CD8-positive, alpha-beta T cell (primary cell): ENCODE measurements at regions of chr7 and their contacts with region 1.

Region 1: DNA sequence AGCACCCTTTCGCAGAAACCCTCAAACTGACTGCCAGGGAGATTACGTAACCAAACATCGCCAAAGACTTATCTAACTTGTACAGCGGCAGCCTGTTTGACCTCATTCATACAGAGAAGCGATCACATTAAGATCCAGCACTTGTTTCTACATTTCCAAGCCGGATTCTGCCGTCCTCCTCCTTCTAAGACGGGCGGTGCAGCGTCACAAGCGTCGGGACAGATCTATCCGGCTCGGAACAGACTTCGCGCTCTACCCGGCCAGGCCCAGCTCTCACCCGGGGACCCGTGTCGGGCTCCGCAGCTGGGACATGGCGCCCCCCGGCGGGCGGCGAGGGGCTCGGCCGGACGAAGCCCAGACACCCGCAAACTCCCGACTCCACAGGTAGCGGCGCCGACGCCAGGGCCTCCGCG is 373 bp downstream of the H2AZ2 start:
- DNase-seq: peak; percentile 75 to 92 (median 84)
- ATAC-seq: peak; percentile 45
- H3K4me3 ChIP-seq: peak overlapping the region; percentile 59 to 66
- H3K4me3 Mint-ChIP-seq: peak overlapping the region; percentile 92
- H3K27ac ChIP-seq: peak overlapping the region; percentile 86 to 99
- H3K27ac Mint-ChIP-seq: peak overlapping the region; percentile 96
- H3K4me1 ChIP-seq: peaks cover 30% of the 10 kb centered on the region
- H3K4me1 Mint-ChIP-seq: peaks cover 42% of the 10 kb centered on the region
- H3K27me3 ChIP-seq: no peaks in the 10 kb centered on the region
- H3K27me3 Mint-ChIP-seq: no peaks in the 10 kb centered on the region
- CTCF ChIP-seq: peak; percentile 56

Region 2: DNA sequence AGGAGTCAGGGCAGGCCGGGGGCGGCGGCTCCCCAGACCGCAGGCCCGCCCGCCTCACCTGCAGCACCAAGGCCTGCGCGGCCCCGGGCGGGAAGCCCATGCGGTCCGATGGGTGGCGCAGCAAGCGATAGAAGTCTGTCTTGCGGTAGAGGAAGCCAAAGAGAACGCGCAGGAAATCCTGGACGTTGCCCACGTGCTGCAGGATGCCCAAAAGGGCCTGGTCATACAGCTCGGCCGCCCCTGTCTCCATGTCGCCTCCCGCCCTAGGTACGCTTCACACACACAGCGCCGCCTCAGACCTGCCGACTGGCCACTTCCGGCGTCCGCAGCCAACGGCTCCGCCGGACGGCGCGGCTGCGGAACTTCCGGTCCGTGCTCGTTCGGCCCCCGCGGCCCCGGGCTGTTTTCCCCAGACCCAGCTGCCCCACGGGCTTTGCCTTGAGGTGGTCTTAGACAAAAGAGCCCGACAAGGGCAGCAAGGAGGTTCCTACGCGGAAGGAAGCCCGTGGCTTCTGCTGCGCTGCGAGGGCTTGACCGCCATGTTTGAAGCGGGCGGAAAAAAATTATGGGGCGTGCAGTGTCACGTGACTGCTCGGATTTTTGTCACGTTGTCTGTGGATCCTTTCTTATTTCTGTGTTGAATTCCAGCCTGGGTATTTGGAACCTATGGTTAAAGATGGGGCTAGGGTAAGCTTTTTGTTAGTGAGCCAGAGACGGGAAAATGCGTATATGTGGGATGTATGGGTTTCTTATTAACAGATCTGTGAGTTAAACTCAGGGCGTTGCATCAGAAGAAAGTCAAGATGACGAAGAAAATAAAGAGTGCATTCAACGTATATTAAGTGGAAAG is 356.9 kb before region 1 on chr7 and contains the start of gene NUDCD3:
- CTCF ChIA-PET with region 1: no interaction called
- POLR2A ChIA-PET with region 1: interaction called, 3 read pairs
- intact Hi-C with region 1: loop called in 1 of 2 experiments (anchors 1 kb)
- DNase-seq: peak; percentile 63 to 91 (median 82)
- ATAC-seq: peak; percentile 67
- H3K4me3 ChIP-seq: peak within 1 kb of the TSS; percentile 77 to 97
- H3K4me3 Mint-ChIP-seq: peak within 1 kb of the TSS; percentile 88
- H3K27ac ChIP-seq: peak within 1 kb of the TSS; percentile 95 to 100
- H3K27ac Mint-ChIP-seq: peak within 1 kb of the TSS; percentile 97
- H3K4me1 ChIP-seq: peaks cover 42% of the 10 kb centered on the region
- H3K4me1 Mint-ChIP-seq: peaks cover 47% of the 10 kb centered on the region
- H3K27me3 ChIP-seq: no peaks in the 10 kb centered on the region
- H3K27me3 Mint-ChIP-seq: peaks cover 2% of the 10 kb centered on the region
- CTCF ChIP-seq: no peak
- total RNA-seq, gene NUDCD3: 40.6 to 45.9 TPM

Region 3: GRCh38 chr7:44581879-44582603 is 265.5 kb before region 1 on chr7 and contains the start of gene TMED4:
- CTCF ChIA-PET with region 1: interaction called, 4 read pairs
- POLR2A ChIA-PET with region 1: interaction called, 16 read pairs
- intact Hi-C with region 1: loop called (anchors 1 kb)
- DNase-seq: peak; percentile 100
- ATAC-seq: peak; percentile 93
- H3K4me3 ChIP-seq: peak within 1 kb of the TSS; percentile 76 to 79
- H3K4me3 Mint-ChIP-seq: peak within 1 kb of the TSS; percentile 93
- H3K27ac ChIP-seq: peak within 1 kb of the TSS; percentile 92 to 96
- H3K27ac Mint-ChIP-seq: peak within 1 kb of the TSS; percentile 98
- H3K4me1 ChIP-seq: peaks cover 26% of the 10 kb centered on the region
- H3K4me1 Mint-ChIP-seq: peaks cover 33% of the 10 kb centered on the region
- H3K27me3 ChIP-seq: no peaks in the 10 kb centered on the region
- H3K27me3 Mint-ChIP-seq: no peaks in the 10 kb centered on the region
- CTCF ChIP-seq: no peak
- total RNA-seq, gene TMED4: 115 to 120 TPM

Region 4: GRCh38 chr7:44633254-44634186 is 214.0 kb before region 1 on chr7:
- CTCF ChIA-PET with region 1: interaction called, 3 read pairs
- POLR2A ChIA-PET with region 1: interaction called, 13 read pairs
- intact Hi-C with region 1: loop called (anchors 2 kb)
- DNase-seq: peak in 5 of 9 experiments; percentile 50 to 85 (median 77)
- ATAC-seq: peak; percentile 42
- H3K4me3 ChIP-seq: no peak overlapping the region
- H3K4me3 Mint-ChIP-seq: peak overlapping the region; percentile 22
- H3K27ac ChIP-seq: peak overlapping the region; percentile 35 to 74
- H3K27ac Mint-ChIP-seq: peak overlapping the region; percentile 99
- H3K4me1 ChIP-seq: peaks cover 75% of the 10 kb centered on the region
- H3K4me1 Mint-ChIP-seq: peaks cover 83% of the 10 kb centered on the region
- H3K27me3 ChIP-seq: no peaks in the 10 kb centered on the region
- H3K27me3 Mint-ChIP-seq: no peaks in the 10 kb centered on the region
- CTCF ChIP-seq: no peak

Region 5: DNA sequence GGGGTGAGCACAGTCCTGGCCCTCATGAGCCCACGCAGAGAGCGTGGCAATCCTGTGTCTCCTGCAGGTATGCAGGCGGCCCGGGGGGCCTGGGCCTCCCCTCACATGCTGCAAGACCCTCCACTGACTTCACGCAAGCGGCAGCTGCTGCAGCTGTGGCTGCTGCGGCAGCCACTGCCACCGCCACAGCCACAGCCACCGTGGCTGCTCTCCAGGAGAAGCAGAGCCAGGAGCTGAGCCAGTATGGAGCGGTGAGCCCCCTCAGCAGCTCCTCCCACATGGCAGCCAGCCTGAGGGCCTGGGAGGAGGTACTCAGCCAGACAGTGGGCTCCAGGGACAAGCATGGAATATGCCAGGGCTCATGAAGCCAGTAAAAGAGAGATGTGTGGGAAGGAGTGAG is 90.2 kb before region 1 on chr7:
- CTCF ChIA-PET with region 1: no interaction called
- POLR2A ChIA-PET with region 1: no interaction called
- intact Hi-C with region 1: no loop called
- DNase-seq: no peak
- ATAC-seq: no peak
- H3K4me3 ChIP-seq: no peak overlapping the region
- H3K4me3 Mint-ChIP-seq: no peak overlapping the region
- H3K27ac ChIP-seq: no peak overlapping the region
- H3K27ac Mint-ChIP-seq: no peak overlapping the region
- H3K4me1 ChIP-seq: peaks cover 25% of the 10 kb centered on the region
- H3K4me1 Mint-ChIP-seq: peaks cover 16% of the 10 kb centered on the region
- H3K27me3 ChIP-seq: no peaks in the 10 kb centered on the region
- H3K27me3 Mint-ChIP-seq: no peaks in the 10 kb centered on the region
- CTCF ChIP-seq: no peak

Region 6: DNA sequence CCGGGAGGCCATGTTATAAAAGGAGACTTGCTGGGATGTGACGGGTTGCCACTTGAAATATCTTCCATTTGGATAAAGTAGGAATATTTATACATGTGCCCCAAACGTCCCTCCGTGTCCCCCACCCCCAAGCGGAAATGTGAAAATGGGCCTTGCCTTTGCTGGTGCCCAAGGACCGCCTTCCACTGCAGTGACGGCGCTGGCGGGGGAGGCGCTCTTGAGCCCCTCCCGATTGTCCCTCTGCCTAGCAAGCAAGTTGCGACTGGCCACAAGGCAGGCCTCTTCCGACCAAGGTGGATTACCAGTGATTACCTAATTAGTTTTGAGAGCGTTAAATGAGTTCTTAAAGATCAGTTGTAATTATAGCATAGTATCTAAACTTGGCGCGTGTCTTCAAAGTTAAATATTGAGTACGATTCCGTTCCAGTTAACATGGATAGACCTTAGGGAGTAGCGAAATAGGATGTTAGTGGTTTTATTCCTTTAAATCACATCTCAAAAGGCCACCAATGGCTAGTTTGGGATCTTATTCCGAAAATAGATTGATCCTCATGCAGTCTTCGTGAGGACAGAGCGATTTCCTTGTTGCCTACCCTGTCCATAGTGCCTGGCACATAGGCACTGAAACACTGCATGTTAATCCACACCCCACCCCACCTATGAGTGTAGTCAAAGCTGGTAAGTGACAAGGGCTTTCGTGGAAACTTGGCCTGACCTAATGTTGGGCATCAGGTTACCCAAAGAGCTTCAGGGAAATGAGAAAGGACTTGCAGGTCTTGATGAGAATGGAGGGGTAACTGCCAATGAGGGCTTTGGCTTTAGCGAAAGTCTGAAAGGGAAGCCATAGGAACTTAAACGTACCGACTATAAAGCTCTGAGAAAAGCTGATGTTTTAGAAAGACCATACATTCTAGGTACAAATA is 49.9 kb before region 1 on chr7:
- CTCF ChIA-PET with region 1: interaction called, 11 read pairs
- POLR2A ChIA-PET with region 1: interaction called, 14 read pairs
- intact Hi-C with region 1: loop called (anchors 1 kb)
- DNase-seq: peak; percentile 64 to 92 (median 82)
- ATAC-seq: peak; percentile 61
- H3K4me3 ChIP-seq: peak overlapping the region; percentile 97 to 98
- H3K4me3 Mint-ChIP-seq: peak overlapping the region; percentile 92
- H3K27ac ChIP-seq: peak overlapping the region; percentile 97 to 99
- H3K27ac Mint-ChIP-seq: peak overlapping the region; percentile 96
- H3K4me1 ChIP-seq: peaks cover 22% of the 10 kb centered on the region
- H3K4me1 Mint-ChIP-seq: peaks cover 44% of the 10 kb centered on the region
- H3K27me3 ChIP-seq: no peaks in the 10 kb centered on the region
- H3K27me3 Mint-ChIP-seq: no peaks in the 10 kb centered on the region
- CTCF ChIP-seq: no peak

Region 7: DNA sequence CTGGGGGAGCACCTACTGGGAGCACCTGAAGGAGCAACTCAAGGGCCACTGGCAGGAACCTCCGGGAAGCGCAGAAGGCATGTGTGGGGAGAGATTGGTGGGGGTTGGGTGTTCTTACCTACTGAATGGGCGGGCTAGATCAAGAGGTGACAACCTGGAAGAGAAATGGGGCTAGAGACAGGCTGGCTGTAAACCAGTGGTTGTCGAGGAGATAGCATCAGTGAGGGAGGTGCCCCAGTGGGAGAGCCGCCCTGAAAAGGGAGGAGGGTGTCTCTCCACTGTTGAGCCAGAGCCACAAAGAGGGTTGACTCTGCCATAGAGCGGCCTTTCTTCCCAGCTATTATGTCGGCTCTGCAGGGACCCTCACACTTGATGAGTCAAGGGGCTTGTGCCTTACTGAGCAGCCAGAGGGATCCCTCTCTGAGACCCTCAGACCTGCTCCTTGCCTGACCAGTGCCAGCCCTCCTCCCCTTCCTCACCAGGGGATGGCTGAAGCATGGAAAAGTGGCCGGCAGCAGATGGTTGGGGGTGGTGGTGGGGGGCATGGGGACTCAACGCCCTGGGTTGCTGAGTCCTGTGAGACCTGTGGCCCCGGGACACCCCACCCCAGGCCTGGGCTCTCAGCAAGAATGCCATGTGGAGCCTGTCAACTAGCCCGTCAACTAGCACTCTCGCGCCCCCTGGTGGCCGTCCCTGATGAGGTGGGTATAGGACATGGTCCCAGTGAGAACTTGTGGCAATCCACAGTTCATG is 74.3 kb after region 1 on chr7:
- CTCF ChIA-PET with region 1: interaction called, 191 read pairs
- POLR2A ChIA-PET with region 1: no interaction called
- intact Hi-C with region 1: no loop called
- DNase-seq: peak; percentile 88 to 99 (median 92)
- ATAC-seq: peak; percentile 94
- H3K4me3 ChIP-seq: no peak overlapping the region
- H3K4me3 Mint-ChIP-seq: no peak overlapping the region
- H3K27ac ChIP-seq: no peak overlapping the region
- H3K27ac Mint-ChIP-seq: no peak overlapping the region
- H3K4me1 ChIP-seq: no peaks in the 10 kb centered on the region
- H3K4me1 Mint-ChIP-seq: peaks cover 5% of the 10 kb centered on the region
- H3K27me3 ChIP-seq: peaks cover 0 to 2% of the 10 kb centered on the region in 2 experiments
- H3K27me3 Mint-ChIP-seq: peaks cover under 1% of the 10 kb centered on the region
- CTCF ChIP-seq: peak; percentile 87

Region 8: DNA sequence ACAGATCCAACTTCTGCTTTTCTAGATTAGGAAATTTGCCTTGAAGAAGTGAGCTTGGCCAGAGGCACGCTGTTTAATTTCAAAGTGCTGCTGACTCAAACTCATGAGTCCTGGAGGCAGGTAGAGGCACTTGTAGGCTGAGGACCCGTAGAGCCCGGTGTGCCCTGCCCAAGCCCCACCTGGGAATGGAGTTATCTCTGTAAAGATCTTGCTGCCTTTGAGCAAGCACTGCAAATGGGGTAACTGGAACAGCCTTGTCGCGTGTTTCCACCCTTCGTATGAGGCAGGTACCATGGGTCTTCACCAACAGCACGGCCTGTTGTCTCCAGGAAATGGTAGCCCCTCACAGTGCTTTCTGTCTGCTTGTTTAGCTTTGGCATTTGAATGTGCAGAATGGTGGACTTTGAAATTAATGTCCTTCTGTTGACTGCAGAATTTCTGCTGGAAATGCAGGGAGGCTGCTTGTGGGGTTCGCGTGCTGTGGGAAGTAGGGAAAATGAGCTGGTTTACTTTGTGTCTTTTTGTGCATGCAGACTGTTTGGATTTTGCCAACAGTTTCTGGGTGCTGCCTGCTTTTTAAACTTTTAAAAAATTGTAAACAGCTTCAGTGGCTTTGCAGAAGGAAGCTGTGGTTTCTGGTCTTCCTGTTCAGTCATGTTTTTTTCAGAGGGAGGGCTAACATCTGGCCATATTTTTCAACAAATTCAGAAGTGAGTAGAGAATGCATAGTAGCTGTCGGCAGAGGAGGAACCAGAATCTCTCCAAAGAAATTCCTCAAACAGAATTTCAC is 179.7 kb after region 1 on chr7:
- CTCF ChIA-PET with region 1: no interaction called
- POLR2A ChIA-PET with region 1: no interaction called
- intact Hi-C with region 1: loop called in 1 of 2 experiments (anchors 1 kb)
- DNase-seq: peak in 7 of 9 experiments; percentile 26 to 75 (median 46)
- ATAC-seq: peak; percentile 63
- H3K4me3 ChIP-seq: peak overlapping the region; percentile 74 to 81
- H3K4me3 Mint-ChIP-seq: peak overlapping the region; percentile 87
- H3K27ac ChIP-seq: peak overlapping the region; percentile 73 to 80
- H3K27ac Mint-ChIP-seq: peak overlapping the region; percentile 91
- H3K4me1 ChIP-seq: peaks cover 42% of the 10 kb centered on the region
- H3K4me1 Mint-ChIP-seq: peaks cover 64% of the 10 kb centered on the region
- H3K27me3 ChIP-seq: no peaks in the 10 kb centered on the region
- H3K27me3 Mint-ChIP-seq: no peaks in the 10 kb centered on the region
- CTCF ChIP-seq: no peak